ENCODE measurements at regions of chr7 and their contacts with region 1.

Region 1: DNA sequence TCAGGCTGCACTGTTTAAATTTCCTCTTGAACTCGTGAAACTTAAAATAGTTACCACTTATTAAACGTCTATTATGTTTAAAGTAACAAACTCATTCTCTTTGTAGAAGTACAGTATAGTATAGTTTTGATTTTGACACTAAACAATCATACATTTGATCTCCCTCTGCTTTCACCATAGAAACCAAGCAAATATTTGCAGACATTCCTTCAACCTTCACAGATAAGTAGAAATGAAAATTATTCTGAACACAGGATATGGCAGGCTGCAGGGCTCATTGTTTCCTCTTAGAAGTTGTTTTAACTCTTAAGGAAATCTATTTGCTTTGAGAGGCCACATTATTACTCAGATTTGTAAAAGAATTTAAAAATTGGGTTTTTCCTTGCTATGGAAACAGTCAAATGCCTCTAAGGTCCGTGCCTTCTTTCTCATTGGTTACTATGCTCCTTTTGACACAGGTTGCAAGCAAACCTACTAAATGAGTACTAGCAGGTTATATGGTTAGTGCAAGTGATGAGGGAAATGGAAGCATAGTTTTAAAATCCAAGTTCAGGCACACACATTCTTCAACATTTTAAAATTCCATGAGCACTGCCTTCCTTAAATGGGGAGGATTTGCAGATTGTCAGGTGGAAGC is 92.8 kb upstream of the FAM133B start:
- DNase-seq: no peak
- H3K4me3 ChIP-seq: no peak overlapping the region
- H3K27ac ChIP-seq: no peak overlapping the region
- H3K4me1 ChIP-seq: peaks cover 51% of the 10 kb centered on the region
- H3K27me3 ChIP-seq: no peaks in the 10 kb centered on the region
- CTCF ChIP-seq: no peak

Region 2: DNA sequence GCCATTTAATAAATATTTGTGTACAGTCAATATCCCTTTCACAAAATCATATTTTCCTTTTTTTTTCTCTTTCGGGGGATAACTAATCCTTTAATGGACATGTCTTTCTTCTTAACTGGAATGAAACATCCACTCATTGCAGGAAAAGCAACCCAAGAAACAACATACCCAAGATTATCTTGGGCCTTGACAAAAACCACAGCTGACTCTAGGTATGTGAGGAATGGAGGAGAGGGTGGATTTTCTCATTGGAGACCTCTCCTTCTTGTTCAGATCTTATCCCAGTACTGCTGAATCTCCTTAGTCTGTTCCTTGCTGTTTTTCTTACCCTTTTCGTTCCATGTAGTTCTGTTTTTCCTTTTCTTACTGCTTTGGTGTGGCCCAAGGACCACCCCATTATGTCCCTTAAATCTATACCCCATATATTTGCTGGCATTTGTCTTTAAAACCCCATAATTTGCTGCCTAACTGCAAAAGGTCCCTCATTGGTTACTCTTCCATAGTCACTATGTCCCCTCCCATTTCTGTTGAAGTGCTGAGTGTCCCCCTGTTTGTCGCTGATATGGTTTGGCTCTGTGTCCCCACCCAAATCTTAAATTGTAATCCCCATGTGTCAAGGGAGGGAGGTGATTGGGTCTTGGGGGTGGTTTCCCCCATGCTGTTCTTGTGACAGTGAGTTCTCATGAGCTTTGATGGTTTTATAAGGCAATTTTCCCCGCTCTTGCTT is 160.2 kb after region 1 on chr7:
- intact Hi-C with region 1: no loop called
- DNase-seq: no peak
- H3K4me3 ChIP-seq: no peak overlapping the region
- H3K27ac ChIP-seq: no peak overlapping the region
- H3K4me1 ChIP-seq: no peaks in the 10 kb centered on the region
- H3K27me3 ChIP-seq: no peaks in the 10 kb centered on the region
- CTCF ChIP-seq: no peak

Region 3: GRCh38 chr7:92875719-92876118 is 192.7 kb after region 1 on chr7:
- intact Hi-C with region 1: no loop called
- DNase-seq: no peak
- H3K4me3 ChIP-seq: no peak overlapping the region
- H3K27ac ChIP-seq: no peak overlapping the region
- H3K4me1 ChIP-seq: no peaks in the 10 kb centered on the region
- H3K27me3 ChIP-seq: no peaks in the 10 kb centered on the region
- CTCF ChIP-seq: no peak

Region 4: DNA sequence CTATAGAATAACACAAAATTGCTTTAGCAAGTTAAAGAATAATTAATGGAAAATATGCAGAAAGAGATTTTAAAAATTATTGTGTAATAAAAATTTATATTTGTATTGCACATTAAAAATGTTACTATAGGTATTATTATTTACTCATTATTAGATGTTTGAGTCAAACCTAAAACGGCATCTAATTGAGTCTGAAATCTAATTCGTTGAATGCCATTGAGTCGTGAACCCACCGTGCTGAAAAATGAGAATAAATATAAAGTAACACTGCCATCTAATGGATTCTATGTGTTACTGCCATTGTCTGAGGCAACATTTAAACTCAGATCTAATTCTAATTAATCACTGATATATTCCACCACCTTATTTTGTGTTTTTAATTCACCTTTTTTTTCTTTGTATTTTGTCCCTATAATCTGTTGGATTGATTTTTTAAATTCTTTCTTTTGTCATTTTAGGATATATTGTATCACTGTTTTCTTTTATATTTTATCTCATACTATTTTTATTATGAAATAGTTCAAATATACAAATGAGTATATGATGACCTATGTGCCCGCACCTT is 372.6 kb after region 1 on chr7:
- intact Hi-C with region 1: loop called (anchors 10 kb)
- DNase-seq: no peak
- H3K4me3 ChIP-seq: no peak overlapping the region
- H3K27ac ChIP-seq: no peak overlapping the region
- H3K4me1 ChIP-seq: peaks cover 6% of the 10 kb centered on the region
- H3K27me3 ChIP-seq: peaks cover 13% of the 10 kb centered on the region
- CTCF ChIP-seq: peak; percentile 90

Measured in left ventricle myocardium inferior (tissue), 1 donor.